GM13977 (cell line): ENCODE measurements at regions of chr14 and their contacts with region 1.

Region 1: GRCh38 chr14:105499256-105500030 is 8.4 kb downstream of the TEDC1 start:
- DNase-seq: no peak
- CTCF ChIP-seq: no peak

Region 2: GRCh38 chr14:105118656-105119403 is 380.6 kb before region 1 on chr14:
- in situ Hi-C with region 1: loop called (anchors 25 kb)
- DNase-seq: no peak
- CTCF ChIP-seq: no peak